PC-9 (cell line): ENCODE measurements at regions of chr3 and their contacts with region 1.

Region 1: DNA sequence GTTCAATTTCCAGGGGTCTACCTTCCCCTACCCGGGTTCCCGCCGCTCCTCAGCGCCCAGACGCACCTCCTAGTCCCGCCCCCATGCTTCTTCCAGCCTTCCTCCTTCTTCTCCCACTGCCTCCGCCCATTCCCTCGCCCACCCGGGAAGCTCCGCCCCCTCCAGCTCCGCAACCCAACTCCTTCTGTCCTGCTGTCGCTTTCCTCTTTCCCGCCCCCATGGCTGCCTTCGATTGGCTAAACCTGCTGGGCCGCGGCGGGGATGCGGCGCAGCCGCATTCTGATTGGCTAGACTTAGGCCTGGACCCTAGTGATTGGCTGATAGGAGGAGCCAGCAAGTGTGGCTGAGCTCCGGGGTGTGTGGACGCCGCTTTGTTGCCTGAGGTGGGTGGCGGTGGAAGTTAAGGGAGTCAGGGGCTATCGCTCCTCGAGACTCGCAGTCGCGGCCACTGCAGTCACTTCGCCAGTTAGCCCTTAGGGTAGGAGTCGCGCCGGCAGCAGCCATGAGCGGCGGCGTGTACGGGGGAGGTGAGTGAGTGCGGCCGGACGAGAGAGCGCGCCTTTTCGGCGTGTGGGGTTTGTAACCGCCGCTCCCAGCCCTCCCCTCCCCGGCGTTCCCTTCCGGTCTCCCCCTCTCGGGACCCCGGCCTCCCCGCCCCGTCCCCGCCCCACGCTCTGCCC is at the start of gene ACTL6A:
- DNase-seq: peak; percentile 100
- H3K4me3 ChIP-seq: peak within 1 kb of the TSS; percentile 84
- H3K27ac ChIP-seq: peak within 1 kb of the TSS; percentile 38
- H3K4me1 ChIP-seq: peaks cover 24% of the 10 kb centered on the region
- H3K27me3 ChIP-seq: no peaks in the 10 kb centered on the region
- CTCF ChIP-seq: no peak
- total RNA-seq, gene ACTL6A: 87.9 and 113 TPM in 2 replicates

Region 2: DNA sequence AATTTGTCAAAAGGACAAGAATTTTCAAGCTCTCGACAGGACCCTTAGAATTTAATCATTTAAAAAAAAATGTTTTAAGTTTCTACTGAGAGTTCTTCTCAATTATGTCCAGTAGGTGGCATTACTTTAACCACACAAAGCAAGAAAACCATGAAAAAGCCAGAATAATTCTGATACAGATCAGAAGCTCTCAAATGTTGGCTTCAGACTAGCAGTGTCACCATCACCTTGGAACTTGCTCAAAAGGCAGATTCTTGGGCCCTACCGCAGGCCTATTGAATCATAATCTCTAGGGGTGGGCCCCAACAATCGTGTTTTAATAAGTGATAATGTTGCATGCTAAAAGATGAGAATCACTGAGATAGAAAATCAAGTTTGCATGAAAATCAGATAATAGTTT is 1126.0 kb before region 1 on chr3:
- CTCF ChIA-PET with region 1: no interaction called
- POLR2A ChIA-PET with region 1: no interaction called
- intact Hi-C with region 1: loop called (anchors 5 kb)
- DNase-seq: no peak
- H3K4me3 ChIP-seq: no peak overlapping the region
- H3K27ac ChIP-seq: no peak overlapping the region
- H3K4me1 ChIP-seq: peaks cover 9% of the 10 kb centered on the region; the same call in 1 of the 2 replicates
- H3K27me3 ChIP-seq: no peaks in the 10 kb centered on the region
- CTCF ChIP-seq: peak; percentile 89

Region 3: GRCh38 chr3:179071550-179072397 is 491.0 kb before region 1 on chr3 and contains the start of gene ZMAT3:
- CTCF ChIA-PET with region 1: no interaction called
- POLR2A ChIA-PET with region 1: interaction called, 3 read pairs
- intact Hi-C with region 1: loop called (anchors 2 kb)
- DNase-seq: peak; percentile 63 to 86
- H3K4me3 ChIP-seq: peak within 1 kb of the TSS; percentile 96
- H3K27ac ChIP-seq: no peak within 1 kb of the TSS
- H3K4me1 ChIP-seq: peaks cover 19% of the 10 kb centered on the region
- H3K27me3 ChIP-seq: no peaks in the 10 kb centered on the region
- CTCF ChIP-seq: no peak
- total RNA-seq, gene ZMAT3: 5.9 and 7.2 TPM in 2 replicates

Region 4: GRCh38 chr3:179322286-179323196 is 240.2 kb before region 1 on chr3 and contains the start of gene ZNF639:
- CTCF ChIA-PET with region 1: interaction called, 3 read pairs
- POLR2A ChIA-PET with region 1: interaction called, 7 read pairs
- intact Hi-C with region 1: loop called (anchors 1 kb)
- DNase-seq: peak; percentile 72 to 91
- H3K4me3 ChIP-seq: peak within 1 kb of the TSS; percentile 80
- H3K27ac ChIP-seq: peak within 1 kb of the TSS; percentile 60
- H3K4me1 ChIP-seq: peaks cover 25% of the 10 kb centered on the region
- H3K27me3 ChIP-seq: no peaks in the 10 kb centered on the region
- CTCF ChIP-seq: peak; percentile 80
- total RNA-seq, gene ZNF639: 39.3 and 40.3 TPM in 2 replicates

Region 5: DNA sequence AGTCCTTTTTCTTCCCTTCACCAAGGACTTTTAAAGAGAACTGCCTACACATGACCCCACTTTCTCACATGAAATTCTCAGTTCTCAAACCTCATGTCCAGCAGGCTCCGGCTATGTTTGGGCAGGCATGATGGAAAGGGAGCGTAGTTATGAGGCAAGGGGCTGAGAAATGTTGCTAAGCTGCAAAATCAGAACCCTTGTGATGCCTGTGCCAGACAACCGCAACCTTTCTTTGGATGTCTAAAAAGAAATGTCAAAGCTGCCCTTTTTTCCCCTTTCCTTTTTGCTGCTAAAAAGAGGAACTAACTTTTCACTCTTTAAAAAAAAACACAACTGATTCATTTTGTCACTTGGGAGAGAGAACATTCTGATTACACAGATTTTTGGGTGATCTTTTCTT is 130.7 kb before region 1 on chr3:
- CTCF ChIA-PET with region 1: interaction called, 18 read pairs
- POLR2A ChIA-PET with region 1: no interaction called
- intact Hi-C with region 1: no loop called
- DNase-seq: no peak
- H3K4me3 ChIP-seq: no peak overlapping the region
- H3K27ac ChIP-seq: no peak overlapping the region
- H3K4me1 ChIP-seq: no peaks in the 10 kb centered on the region
- H3K27me3 ChIP-seq: no peaks in the 10 kb centered on the region
- CTCF ChIP-seq: no peak

Region 6: GRCh38 chr3:179528772-179529171 is 34.0 kb before region 1 on chr3:
- CTCF ChIA-PET with region 1: interaction called, 3 read pairs
- POLR2A ChIA-PET with region 1: interaction called, 29 read pairs
- intact Hi-C with region 1: no loop called
- DNase-seq: no peak
- H3K4me3 ChIP-seq: no peak overlapping the region
- H3K27ac ChIP-seq: no peak overlapping the region
- H3K4me1 ChIP-seq: no peaks in the 10 kb centered on the region
- H3K27me3 ChIP-seq: no peaks in the 10 kb centered on the region
- CTCF ChIP-seq: no peak